ENCODE measurements at regions of chr11 and their contacts with region 1.

Region 1: DNA sequence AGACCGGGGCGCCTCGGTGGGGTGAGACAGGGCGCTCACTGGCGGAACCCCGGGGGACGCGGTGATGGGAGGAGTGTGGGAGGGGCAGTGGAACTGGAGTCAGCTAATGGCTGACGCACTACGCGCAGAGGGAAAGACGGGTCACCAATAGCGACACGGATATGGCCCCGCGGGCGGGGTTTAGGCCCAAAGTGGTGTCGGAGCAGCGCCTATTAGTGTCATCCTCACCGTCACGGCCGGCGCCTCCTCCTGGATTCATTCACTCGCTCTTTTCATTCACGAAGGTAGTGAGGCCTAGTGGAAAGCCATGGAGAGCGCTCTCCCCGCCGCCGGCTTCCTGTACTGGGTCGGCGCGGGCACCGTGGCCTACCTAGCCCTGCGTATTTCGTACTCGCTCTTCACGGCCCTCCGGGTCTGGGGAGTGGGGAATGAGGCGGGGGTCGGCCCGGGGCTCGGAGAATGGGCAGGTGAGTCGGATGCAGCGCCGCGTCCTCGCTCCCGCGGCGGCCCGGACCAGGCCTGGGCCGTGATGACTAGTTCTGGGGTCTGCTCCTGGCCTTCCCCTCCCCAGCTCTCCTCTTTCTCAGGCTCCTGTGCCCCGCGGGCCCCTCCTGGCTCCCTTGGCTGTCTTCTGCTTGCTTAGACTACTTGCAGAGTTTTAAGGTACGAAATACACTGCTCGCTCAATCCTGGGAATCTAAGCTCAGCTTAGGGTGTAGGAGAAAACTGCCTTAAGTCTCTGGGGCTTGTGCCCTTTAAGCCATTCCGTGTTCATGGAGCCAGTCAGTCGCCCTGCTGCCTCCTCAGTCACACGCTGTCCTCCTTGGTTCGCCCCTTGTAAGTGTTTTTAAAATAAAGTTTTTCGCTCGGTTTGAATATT is at the start of gene HSD17B12:
- DNase-seq: peak; percentile 99
- H3K4me3 Mint-ChIP-seq: peak within 1 kb of the TSS; percentile 81
- H3K27ac Mint-ChIP-seq: peak within 1 kb of the TSS; percentile 79
- H3K4me1 Mint-ChIP-seq: no peaks in the 10 kb centered on the region
- H3K27me3 Mint-ChIP-seq: peaks cover under 1% of the 10 kb centered on the region
- CTCF ChIP-seq: no peak
- total RNA-seq, gene HSD17B12: 114 TPM in 2 replicates

Region 2: GRCh38 chr11:43802509-43802908 is 121.7 kb after region 1 on chr11:
- CTCF ChIA-PET with region 1: no interaction called
- intact Hi-C with region 1: loop called (anchors 10 kb)
- DNase-seq: no peak
- H3K4me3 Mint-ChIP-seq: no peak overlapping the region
- H3K27ac Mint-ChIP-seq: no peak overlapping the region
- H3K4me1 Mint-ChIP-seq: no peaks in the 10 kb centered on the region
- H3K27me3 Mint-ChIP-seq: no peaks in the 10 kb centered on the region
- CTCF ChIP-seq: peak; percentile 20

Measured in Calu3 (cell line).